CD8-positive, alpha-beta T cell (primary cell): ENCODE measurements at regions of chrX and their contacts with region 1.

Region 1: GRCh38 chrX:10119399-10119990 is 37.3 kb upstream of the CLCN4 start:
- DNase-seq: peak; percentile 43 to 90 (median 67)
- ATAC-seq: peak; percentile 72
- H3K4me3 ChIP-seq: no peak overlapping the region
- H3K4me3 Mint-ChIP-seq: no peak overlapping the region
- H3K27ac ChIP-seq: peak overlapping the region in 1 of 2 experiments; percentile 36
- H3K27ac Mint-ChIP-seq: peak overlapping the region; percentile 34
- H3K4me1 ChIP-seq: no peaks in the 10 kb centered on the region
- H3K4me1 Mint-ChIP-seq: peaks cover 25% of the 10 kb centered on the region
- H3K27me3 ChIP-seq: no peaks in the 10 kb centered on the region
- H3K27me3 Mint-ChIP-seq: no peaks in the 10 kb centered on the region
- CTCF ChIP-seq: peak; percentile 99

Region 2: DNA sequence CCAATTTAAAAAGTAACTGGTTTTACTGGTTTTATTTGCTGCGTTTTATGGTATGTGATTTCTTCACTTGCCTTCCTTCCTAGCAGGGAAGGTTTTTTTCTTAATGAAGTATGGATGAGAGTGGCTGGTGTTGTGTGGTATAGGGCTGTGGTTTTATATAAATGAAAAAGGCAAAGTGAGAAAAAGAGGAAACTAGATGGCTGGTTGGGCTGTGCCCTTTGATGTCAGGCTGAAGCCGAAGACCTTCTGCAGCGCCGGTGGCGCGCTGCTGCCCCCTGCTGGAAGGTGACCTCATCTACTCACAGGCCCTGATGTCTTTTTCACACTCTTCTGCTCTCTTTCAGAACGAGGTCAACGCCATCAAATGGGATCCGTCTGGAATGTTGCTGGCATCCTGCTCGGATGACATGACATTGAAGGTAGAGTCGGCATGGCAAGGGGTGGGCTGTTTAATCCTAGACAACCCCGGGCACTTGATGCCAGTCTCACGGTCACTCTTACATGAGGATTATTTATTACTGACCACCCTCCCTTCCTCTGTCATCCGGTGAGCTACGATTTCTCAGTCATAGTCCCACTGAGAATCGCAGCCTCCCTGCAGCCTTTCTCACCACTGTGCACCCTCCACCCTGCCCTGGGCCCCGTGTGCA is 410.5 kb before region 1 on chrX:
- CTCF ChIA-PET with region 1: no interaction called
- POLR2A ChIA-PET with region 1: no interaction called
- intact Hi-C with region 1: loop called in 1 of 2 experiments (anchors 2 kb)
- DNase-seq: peak; percentile 48 to 89 (median 75)
- ATAC-seq: peak; percentile 75
- H3K4me3 ChIP-seq: no peak overlapping the region
- H3K4me3 Mint-ChIP-seq: no peak overlapping the region
- H3K27ac ChIP-seq: no peak overlapping the region
- H3K27ac Mint-ChIP-seq: peak overlapping the region; percentile 27
- H3K4me1 ChIP-seq: peaks cover 4% of the 10 kb centered on the region
- H3K4me1 Mint-ChIP-seq: peaks cover 13% of the 10 kb centered on the region
- H3K27me3 ChIP-seq: no peaks in the 10 kb centered on the region
- H3K27me3 Mint-ChIP-seq: no peaks in the 10 kb centered on the region
- CTCF ChIP-seq: peak; percentile 46

Region 3: GRCh38 chrX:9988762-9989161 is 130.7 kb before region 1 on chrX:
- CTCF ChIA-PET with region 1: interaction called, 24 read pairs
- POLR2A ChIA-PET with region 1: no interaction called
- intact Hi-C with region 1: no loop called
- DNase-seq: peak in 2 of 9 experiments; percentile 23 to 37
- ATAC-seq: no peak
- H3K4me3 ChIP-seq: no peak overlapping the region
- H3K4me3 Mint-ChIP-seq: no peak overlapping the region
- H3K27ac ChIP-seq: no peak overlapping the region
- H3K27ac Mint-ChIP-seq: no peak overlapping the region
- H3K4me1 ChIP-seq: no peaks in the 10 kb centered on the region
- H3K4me1 Mint-ChIP-seq: no peaks in the 10 kb centered on the region
- H3K27me3 ChIP-seq: no peaks in the 10 kb centered on the region
- H3K27me3 Mint-ChIP-seq: no peaks in the 10 kb centered on the region
- CTCF ChIP-seq: no peak

Region 4: DNA sequence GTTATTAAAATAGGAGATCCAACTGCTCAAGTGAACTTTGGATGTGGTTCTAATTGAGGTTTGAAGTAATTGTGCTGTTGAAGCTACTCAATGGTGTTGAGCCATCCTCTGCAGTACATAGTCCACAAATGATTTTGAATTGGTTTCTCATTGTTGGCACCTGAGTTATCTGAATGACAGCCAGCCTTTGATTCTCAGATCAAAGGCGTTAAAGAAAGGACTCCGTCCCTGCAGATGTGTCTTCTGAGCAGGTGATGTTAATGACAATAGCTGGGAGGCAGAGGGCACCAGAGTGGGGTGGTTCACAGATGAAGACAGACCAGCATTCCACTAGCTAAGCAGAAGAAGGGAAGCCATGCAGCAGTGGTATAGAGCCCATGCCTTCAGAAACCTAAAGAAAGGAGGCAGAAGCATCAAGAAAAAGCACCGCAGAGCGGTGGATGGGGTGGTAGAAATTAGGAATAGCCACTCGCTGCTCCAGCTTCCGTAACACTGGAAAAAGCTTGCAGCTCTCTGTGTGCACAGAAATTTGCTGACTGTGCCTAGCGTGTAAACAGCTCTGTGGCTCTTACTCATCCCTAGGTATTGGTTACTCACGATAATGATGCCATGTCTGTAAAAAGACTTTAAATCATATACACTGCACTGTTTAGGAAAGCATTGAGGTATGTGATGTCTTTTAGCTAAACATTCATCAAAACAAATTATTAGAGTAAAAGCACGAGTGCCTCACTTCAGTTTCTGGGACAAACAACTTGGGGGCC is 41.9 kb before region 1 on chrX:
- CTCF ChIA-PET with region 1: interaction called, 68 read pairs
- POLR2A ChIA-PET with region 1: no interaction called
- intact Hi-C with region 1: loop called (anchors 1 to 2 kb)
- DNase-seq: peak in 2 of 9 experiments; percentile 40 to 55
- ATAC-seq: peak; percentile 68
- H3K4me3 ChIP-seq: no peak overlapping the region
- H3K4me3 Mint-ChIP-seq: no peak overlapping the region
- H3K27ac ChIP-seq: no peak overlapping the region
- H3K27ac Mint-ChIP-seq: no peak overlapping the region
- H3K4me1 ChIP-seq: no peaks in the 10 kb centered on the region
- H3K4me1 Mint-ChIP-seq: peaks cover 8% of the 10 kb centered on the region
- H3K27me3 ChIP-seq: no peaks in the 10 kb centered on the region
- H3K27me3 Mint-ChIP-seq: no peaks in the 10 kb centered on the region
- CTCF ChIP-seq: no peak

Region 5: DNA sequence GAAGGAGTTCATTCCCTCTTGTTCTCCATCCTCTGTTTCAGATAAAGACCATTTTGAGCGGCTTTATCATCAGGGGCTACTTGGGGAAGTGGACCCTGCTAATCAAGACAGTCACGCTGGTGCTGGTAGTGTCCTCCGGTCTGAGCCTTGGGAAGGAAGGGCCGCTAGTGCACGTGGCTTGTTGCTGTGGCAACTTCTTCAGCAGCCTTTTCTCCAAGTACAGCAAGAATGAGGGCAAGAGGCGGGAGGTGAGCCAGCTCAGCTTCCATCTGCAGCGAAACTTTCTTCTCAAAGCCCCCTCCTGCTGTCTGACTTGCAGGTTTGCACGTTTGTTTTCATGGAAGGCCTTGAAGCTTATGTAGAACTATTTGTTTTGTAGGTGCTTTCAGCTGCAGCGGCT is 86.8 kb after region 1 on chrX:
- CTCF ChIA-PET with region 1: no interaction called
- POLR2A ChIA-PET with region 1: no interaction called
- intact Hi-C with region 1: no loop called
- DNase-seq: no peak
- ATAC-seq: no peak
- H3K4me3 ChIP-seq: no peak overlapping the region
- H3K4me3 Mint-ChIP-seq: no peak overlapping the region
- H3K27ac ChIP-seq: no peak overlapping the region
- H3K27ac Mint-ChIP-seq: no peak overlapping the region
- H3K4me1 ChIP-seq: no peaks in the 10 kb centered on the region
- H3K4me1 Mint-ChIP-seq: no peaks in the 10 kb centered on the region
- H3K27me3 ChIP-seq: no peaks in the 10 kb centered on the region
- H3K27me3 Mint-ChIP-seq: peaks cover 1% of the 10 kb centered on the region
- CTCF ChIP-seq: no peak

Region 6: DNA sequence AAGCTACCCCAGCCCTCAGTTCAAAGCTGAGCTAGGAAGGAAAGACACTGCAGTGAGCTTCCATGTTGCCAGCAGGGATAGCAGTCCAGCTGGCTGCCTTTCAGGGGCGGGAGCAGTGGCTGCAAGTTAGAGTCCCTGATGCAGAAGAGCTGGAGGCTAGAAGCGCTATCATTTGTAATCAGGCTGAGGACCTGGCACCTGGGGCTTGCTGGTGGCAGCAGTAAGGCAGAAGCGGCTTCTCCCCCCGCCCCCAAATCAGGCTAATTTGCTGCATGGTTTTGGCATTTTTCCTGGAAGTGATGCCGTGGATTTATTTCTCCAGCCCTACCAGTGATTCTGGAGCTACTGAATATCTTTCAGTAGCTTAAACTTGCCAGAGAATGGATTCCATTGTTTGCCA is 240.6 kb after region 1 on chrX:
- CTCF ChIA-PET with region 1: no interaction called
- POLR2A ChIA-PET with region 1: no interaction called
- intact Hi-C with region 1: no loop called
- DNase-seq: no peak
- ATAC-seq: no peak
- H3K4me3 ChIP-seq: no peak overlapping the region
- H3K4me3 Mint-ChIP-seq: no peak overlapping the region
- H3K27ac ChIP-seq: no peak overlapping the region
- H3K27ac Mint-ChIP-seq: no peak overlapping the region
- H3K4me1 ChIP-seq: no peaks in the 10 kb centered on the region
- H3K4me1 Mint-ChIP-seq: no peaks in the 10 kb centered on the region
- H3K27me3 ChIP-seq: no peaks in the 10 kb centered on the region
- H3K27me3 Mint-ChIP-seq: no peaks in the 10 kb centered on the region
- CTCF ChIP-seq: no peak

Region 7: GRCh38 chrX:11111038-11111851 is 991.8 kb after region 1 on chrX and contains the start of gene HCCS:
- CTCF ChIA-PET with region 1: no interaction called
- POLR2A ChIA-PET with region 1: no interaction called
- intact Hi-C with region 1: loop called in 1 of 2 experiments (anchors 5 kb)
- DNase-seq: peak; percentile 67 to 91 (median 84)
- ATAC-seq: peak; percentile 85
- H3K4me3 ChIP-seq: peak within 1 kb of the TSS; percentile 72 to 86
- H3K4me3 Mint-ChIP-seq: peak within 1 kb of the TSS; percentile 95
- H3K27ac ChIP-seq: peak within 1 kb of the TSS; percentile 82 to 95
- H3K27ac Mint-ChIP-seq: peak within 1 kb of the TSS; percentile 99
- H3K4me1 ChIP-seq: peaks cover 15% of the 10 kb centered on the region
- H3K4me1 Mint-ChIP-seq: peaks cover 30% of the 10 kb centered on the region
- H3K27me3 ChIP-seq: no peaks in the 10 kb centered on the region
- H3K27me3 Mint-ChIP-seq: no peaks in the 10 kb centered on the region
- CTCF ChIP-seq: no peak
- total RNA-seq, gene HCCS: 8.3 to 9.1 TPM